Gastrocnemius medialis (tissue), 4 donors: ENCODE measurements at regions of chr4 and their contacts with region 1.

Region 1: DNA sequence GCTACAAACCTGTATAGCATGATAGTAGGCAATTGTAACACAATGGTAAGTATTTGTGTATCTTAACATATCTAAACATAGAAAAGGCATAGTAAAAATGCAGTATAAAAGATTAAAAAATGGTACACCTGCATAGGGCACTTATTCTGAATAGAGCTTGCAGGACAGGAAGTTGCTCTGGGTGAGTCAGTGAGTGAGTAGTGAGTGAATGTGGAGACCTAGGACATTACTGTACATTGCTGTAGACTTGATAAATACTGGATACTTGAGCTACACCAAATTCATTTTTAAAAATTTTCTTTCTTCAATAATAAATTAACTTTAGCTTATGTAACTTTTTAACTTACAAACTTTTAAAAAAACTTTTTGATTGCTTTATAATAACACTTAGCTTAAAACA is 68.2 kb upstream of the MAML3 start:
- DNase-seq: no peak
- ATAC-seq: no peak
- H3K4me3 ChIP-seq: no peak overlapping the region
- H3K27ac ChIP-seq: no peak overlapping the region
- H3K4me1 ChIP-seq: no peaks in the 10 kb centered on the region
- H3K27me3 ChIP-seq: no peaks in the 10 kb centered on the region
- CTCF ChIP-seq: no peak
- POLR2A ChIP-seq: no peak

Region 2: DNA sequence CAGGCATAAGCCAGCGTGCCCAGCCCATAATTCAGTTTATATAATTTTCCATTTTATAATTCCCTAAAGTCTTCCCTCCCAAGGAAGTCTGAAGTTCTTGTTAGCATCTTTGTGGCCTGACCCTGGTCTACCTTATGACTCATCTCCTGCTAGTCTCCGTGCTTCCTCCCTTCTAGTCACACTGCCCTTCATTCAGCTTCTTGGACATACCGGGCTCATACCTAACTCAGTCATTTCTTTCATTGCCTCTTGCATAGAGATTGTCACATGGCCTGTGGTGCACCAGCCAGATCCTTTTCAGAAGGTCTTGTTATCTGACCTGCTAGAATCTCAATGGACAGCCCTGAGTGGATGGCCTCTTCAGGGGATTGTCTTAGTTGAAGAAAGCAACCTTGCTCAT is 45.4 kb before region 1 on chr4:
- in situ Hi-C with region 1: loop called in 1 of 4 experiments (anchors 10 kb)
- intact Hi-C with region 1: no loop called
- DNase-seq: no peak
- ATAC-seq: no peak
- H3K4me3 ChIP-seq: no peak overlapping the region
- H3K27ac ChIP-seq: no peak overlapping the region
- H3K4me1 ChIP-seq: no peaks in the 10 kb centered on the region
- H3K27me3 ChIP-seq: no peaks in the 10 kb centered on the region
- CTCF ChIP-seq: no peak
- POLR2A ChIP-seq: no peak